ENCODE measurements at regions of chr1 and their contacts with region 1.

Region 1: DNA sequence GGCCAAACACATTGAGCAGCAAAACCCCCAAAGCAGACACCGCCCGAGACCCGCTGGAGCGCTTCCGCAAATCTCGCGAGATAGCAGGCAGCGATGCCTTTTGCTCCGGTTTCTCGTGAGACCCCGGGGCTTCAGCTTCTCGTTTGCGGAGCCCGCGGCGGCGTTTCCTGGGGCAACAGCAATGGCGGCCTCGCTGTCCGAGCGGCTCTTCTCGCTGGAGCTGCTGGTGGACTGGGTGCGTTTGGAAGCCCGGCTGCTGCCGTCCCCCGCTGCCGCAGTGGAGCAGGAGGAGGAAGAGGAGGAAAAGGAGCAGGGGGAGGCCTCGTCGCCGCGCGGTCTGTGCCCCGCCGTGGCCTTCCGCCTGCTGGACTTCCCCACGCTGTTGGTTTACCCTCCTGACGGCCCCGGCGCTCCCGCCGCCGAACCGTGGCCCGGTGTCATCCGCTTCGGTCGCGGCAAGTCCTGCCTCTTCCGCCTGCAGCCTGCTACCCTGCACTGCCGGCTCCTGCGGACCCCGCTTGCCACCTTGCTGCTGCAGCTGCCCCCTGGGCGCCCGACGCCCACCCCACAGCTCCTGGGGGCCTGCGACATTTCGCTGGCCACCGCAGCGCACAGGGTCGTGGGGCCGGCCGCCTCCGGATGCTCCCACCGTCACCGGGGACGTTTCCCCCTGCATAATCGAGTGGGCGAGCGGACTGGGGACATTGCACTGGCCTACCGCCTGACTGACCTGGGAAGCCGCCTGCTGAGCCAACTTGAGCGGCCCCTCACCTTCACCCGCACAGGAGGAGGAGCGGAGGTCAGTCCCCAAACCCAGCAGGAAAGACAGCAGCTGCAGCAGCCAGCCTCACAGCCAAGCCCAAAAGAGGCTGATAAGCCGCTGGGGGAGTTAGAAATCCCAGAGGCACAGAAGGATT is at the start of gene MAP10:
- DNase-seq: peak; percentile 54
- ATAC-seq: peak; percentile 85
- H3K4me3 Mint-ChIP-seq: peak within 1 kb of the TSS; percentile 91
- H3K27ac Mint-ChIP-seq: peak within 1 kb of the TSS; percentile 88
- H3K4me1 Mint-ChIP-seq: peaks cover 16% of the 10 kb centered on the region
- H3K27me3 Mint-ChIP-seq: no peaks in the 10 kb centered on the region
- CTCF ChIP-seq: no peak
- total RNA-seq, gene MAP10: 2.7 and 3.0 TPM in 2 replicates

Region 2: DNA sequence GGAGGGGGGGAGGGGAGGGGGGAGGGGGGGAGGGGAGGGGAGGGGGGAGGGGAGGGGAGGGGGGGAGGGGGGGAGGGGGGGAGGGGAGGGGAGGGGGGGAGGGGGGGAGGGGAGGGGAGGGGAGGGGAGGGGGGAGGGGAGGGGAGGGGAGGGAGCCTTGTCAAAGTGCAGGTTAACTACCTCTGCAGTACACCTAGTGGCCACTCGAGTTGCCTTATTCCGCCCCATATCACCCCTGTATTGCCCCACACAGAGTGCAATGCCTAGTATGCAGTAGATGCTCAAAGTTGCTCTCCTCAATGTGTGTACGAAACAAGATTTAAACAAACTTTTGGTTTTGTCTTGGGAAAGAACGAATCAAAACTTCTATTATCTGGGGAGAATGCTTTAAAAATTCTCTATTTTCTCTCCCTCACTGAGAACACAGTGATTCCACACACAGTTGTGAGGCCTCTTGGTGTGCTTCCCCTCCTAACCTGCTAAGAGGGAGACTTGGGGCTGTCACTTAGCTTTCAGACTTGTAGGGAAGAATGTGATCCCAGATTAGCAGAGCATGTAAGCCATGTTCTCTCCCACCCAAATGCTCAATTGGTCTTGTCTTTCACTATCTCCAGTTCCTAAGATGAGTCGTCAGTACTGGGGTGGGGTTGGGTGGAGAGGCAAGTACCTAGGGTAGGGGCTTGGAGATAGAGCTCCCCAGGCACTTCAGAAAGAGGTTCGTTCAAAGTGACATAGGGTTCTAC is 80.1 kb before region 1 on chr1:
- CTCF ChIA-PET with region 1: no interaction called
- POLR2A ChIA-PET with region 1: interaction called, 13 read pairs
- intact Hi-C with region 1: no loop called
- DNase-seq: no peak
- ATAC-seq: no peak
- H3K4me3 Mint-ChIP-seq: no peak overlapping the region
- H3K27ac Mint-ChIP-seq: no peak overlapping the region
- H3K4me1 Mint-ChIP-seq: peaks cover 6% of the 10 kb centered on the region
- H3K27me3 Mint-ChIP-seq: no peaks in the 10 kb centered on the region
- CTCF ChIP-seq: no peak

Region 3: GRCh38 chr1:232751393-232752140 is 54.0 kb before region 1 on chr1:
- CTCF ChIA-PET with region 1: no interaction called
- POLR2A ChIA-PET with region 1: no interaction called
- intact Hi-C with region 1: no loop called
- DNase-seq: no peak
- ATAC-seq: no peak
- H3K4me3 Mint-ChIP-seq: no peak overlapping the region
- H3K27ac Mint-ChIP-seq: no peak overlapping the region
- H3K4me1 Mint-ChIP-seq: no peaks in the 10 kb centered on the region
- H3K27me3 Mint-ChIP-seq: no peaks in the 10 kb centered on the region
- CTCF ChIP-seq: no peak

Region 4: GRCh38 chr1:232853994-232854797 is 48.7 kb after region 1 on chr1:
- CTCF ChIA-PET with region 1: no interaction called
- POLR2A ChIA-PET with region 1: no interaction called
- intact Hi-C with region 1: no loop called
- DNase-seq: no peak
- ATAC-seq: no peak
- H3K4me3 Mint-ChIP-seq: no peak overlapping the region
- H3K27ac Mint-ChIP-seq: no peak overlapping the region
- H3K4me1 Mint-ChIP-seq: no peaks in the 10 kb centered on the region
- H3K27me3 Mint-ChIP-seq: peaks cover 8% of the 10 kb centered on the region
- CTCF ChIP-seq: no peak

Region 5: GRCh38 chr1:233367057-233367759 is 561.7 kb after region 1 on chr1:
- CTCF ChIA-PET with region 1: no interaction called
- POLR2A ChIA-PET with region 1: no interaction called
- intact Hi-C with region 1: no loop called
- DNase-seq: no peak
- ATAC-seq: no peak
- H3K4me3 Mint-ChIP-seq: no peak overlapping the region
- H3K27ac Mint-ChIP-seq: no peak overlapping the region
- H3K4me1 Mint-ChIP-seq: no peaks in the 10 kb centered on the region
- H3K27me3 Mint-ChIP-seq: no peaks in the 10 kb centered on the region
- CTCF ChIP-seq: no peak